ENCODE measurements at regions of chr2 and their contacts with region 1.

Region 1: GRCh38 chr2:150426315-150426714 is 61.2 kb downstream of the RND3 start:
- DNase-seq: no peak

Region 2: DNA sequence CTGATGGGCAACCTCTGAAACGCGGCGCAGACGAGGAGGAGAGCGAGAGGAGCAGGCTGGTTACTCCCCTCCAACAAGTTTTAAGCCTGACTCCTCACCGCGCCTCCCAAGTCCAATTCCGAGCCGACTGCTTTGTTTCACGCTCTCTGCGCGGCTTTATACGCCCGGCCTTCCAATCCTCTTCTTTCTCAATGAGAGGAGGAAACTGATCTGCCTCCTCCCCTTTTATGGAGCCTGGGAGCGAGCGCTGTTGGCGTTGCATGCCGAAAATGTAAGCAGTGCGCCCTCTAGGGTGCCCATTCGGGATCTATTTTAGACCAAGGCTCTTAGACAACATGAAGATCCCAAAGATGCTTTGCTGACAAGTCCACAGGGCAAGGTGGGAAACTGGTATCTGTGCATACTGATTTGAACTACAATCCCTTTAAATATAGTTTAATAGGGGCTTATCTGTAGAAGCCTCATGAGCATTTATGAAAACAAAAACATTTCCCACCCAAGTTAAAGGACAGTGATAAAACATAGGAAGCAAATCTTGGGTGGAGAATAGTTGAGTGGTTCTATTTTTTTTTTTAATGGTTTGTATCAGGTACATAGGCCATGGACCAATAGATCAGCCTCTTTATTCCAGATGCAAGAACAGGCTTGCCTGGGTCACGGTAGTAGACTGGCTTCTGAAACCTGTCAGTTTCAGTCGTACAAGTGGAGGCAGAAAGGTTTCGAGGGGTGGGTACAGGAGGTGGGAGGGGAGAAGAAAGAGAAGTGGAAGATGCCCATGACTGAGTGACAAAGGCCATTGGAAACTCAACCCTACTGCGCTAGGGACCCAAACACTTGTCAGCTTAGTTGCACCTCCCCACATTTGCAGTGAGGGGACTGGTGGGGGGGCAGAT is 61.5 kb after region 1 on chr2 and contains the start of gene RND3:
- intact Hi-C with region 1: loop called in 1 of 2 experiments (anchors 2 kb)
- DNase-seq: peak; percentile 98
- total RNA-seq, gene RND3: 67.5 to 100 TPM

Region 3: GRCh38 chr2:152186262-152186661 is 1759.9 kb after region 1 on chr2:
- intact Hi-C with region 1: no loop called
- DNase-seq: no peak